Ovary (tissue), 10 donors: ENCODE measurements at regions of chr11 and their contacts with region 1.

Region 1: DNA sequence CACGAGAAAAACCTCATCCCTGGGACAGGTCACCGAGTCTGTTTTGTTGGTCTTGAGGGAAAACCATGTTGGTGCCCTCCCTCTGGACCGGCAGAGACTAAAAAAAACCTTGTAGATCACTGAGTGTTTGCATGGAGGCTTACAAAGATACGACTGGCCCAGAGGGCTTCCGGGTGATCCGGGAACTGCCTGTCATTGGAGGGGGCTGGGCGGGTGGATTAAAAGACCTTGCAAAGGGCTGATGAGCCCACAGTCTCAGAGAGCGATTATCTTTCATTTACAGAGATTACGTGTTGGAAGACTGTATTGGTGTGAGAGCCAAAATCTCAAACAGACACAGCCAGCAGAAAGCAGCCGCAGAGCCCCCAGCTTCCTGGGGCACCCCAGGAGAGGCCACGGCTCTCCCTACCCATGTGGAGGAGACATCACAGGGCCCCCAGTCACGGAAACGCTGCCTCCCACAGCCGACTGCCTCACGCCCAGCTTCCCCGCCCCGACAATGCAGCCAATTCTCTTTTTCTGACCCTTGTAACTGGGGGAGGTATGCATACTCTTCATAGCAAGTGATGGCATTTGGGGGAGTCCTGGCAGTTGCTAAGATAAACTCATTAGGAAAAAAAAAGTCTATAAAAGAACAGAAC is 426.4 kb downstream of the CTTN start:
- DNase-seq: no peak
- H3K4me3 ChIP-seq: no peak overlapping the region
- H3K27ac ChIP-seq: no peak overlapping the region
- H3K4me1 ChIP-seq: no peaks in the 10 kb centered on the region
- H3K27me3 ChIP-seq: no peaks in the 10 kb centered on the region
- CTCF ChIP-seq: no peak
- EP300 ChIP-seq: no peak
- POLR2A ChIP-seq: no peak

Region 2: DNA sequence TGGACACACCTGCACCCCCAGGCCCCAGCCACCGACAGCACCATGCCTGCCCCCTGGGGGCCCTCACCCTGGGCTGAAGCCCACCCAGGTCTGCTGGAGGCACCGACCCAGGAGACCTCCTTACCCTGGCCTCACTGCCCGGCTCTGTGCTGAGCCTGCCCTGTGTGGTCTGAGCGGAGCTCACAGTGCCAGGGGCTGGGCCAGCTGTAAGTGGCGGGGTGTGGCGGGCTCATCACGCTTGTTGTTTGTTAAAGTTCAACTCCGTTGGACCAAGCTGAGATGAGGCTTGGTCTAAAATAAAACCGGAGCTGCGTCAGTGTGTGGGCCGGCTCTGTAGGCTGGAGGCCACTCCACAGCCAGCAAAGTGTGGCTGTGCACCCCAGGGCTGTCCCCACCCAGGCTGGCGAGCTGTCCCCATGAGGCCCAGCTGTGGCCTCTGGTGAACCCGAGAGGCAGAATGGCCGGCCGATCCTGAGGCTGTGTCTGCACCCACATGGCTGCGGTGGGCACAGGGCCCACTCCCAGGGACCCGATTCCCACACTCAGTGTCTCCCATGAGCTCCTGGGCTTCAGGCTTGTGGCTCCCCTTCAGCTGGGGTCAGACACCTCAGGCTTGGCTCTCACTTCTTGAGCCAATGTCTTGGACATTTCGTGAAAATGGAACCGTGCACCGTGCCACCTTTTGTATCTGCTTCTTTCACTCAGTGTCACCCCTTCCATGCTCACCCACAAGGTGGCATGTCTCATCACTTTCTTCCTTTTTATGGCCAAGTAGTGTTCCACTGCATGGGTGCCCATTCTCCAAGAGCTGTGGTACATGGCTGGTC is 288.5 kb before region 1 on chr11:
- intact Hi-C with region 1: loop called in 1 of 4 experiments (anchors 5 kb)
- DNase-seq: peak in 1 of 5 donors; percentile 19
- H3K4me3 ChIP-seq: no peak overlapping the region
- H3K27ac ChIP-seq: no peak overlapping the region
- H3K4me1 ChIP-seq: no peaks in the 10 kb centered on the region
- H3K27me3 ChIP-seq: no peaks in the 10 kb centered on the region
- CTCF ChIP-seq: no peak
- EP300 ChIP-seq: no peak
- POLR2A ChIP-seq: no peak